ENCODE measurements at regions of chr18 and their contacts with region 1.

Region 1: DNA sequence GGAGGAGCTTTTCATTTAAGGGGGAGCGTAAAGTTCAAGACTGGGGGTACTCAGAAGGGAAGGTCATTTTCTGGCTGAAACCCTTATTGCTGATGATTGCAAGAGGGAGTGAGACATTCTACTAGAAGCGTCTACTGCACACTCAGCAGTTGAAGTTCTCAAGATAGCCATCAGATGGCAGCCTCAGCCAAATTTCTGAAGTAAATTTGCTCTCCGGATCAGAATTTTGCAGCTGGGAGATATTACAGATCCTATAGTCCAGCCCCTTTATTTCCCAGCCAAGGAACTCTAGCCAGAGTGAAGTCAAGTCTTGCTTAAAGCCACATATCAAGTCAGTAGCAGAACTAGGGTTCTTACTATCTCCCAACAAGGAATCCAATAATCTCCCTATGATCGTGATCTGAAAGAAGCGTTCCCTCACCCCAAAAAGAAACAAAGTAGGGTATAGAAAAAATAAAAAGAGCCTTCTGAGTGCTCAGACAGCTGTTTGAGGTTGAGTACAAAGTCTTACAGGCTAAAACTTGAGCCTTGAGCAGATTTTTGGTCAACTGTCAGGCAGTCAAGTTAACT is 24.0 kb downstream of the RAX start:
- DNase-seq: peak; percentile 69
- H3K4me3 ChIP-seq: no peak overlapping the region
- H3K27ac ChIP-seq: no peak overlapping the region
- H3K4me1 ChIP-seq: no peaks in the 10 kb centered on the region
- H3K27me3 ChIP-seq: peaks cover 5 to 16% of the 10 kb centered on the region in 2 experiments
- CTCF ChIP-seq: peak; percentile 51 to 70
- POLR2A ChIP-seq: no peak

Region 2: GRCh38 chr18:58960946-58961722 is 288.2 kb before region 1 on chr18:
- CTCF ChIA-PET with region 1: no interaction called
- POLR2A ChIA-PET with region 1: no interaction called
- dilution Hi-C with region 1: no loop called
- intact Hi-C with region 1: no loop called
- DNase-seq: no peak
- H3K4me3 ChIP-seq: no peak overlapping the region
- H3K27ac ChIP-seq: no peak overlapping the region
- H3K4me1 ChIP-seq: no peaks in the 10 kb centered on the region
- H3K27me3 ChIP-seq: no peaks in the 10 kb centered on the region
- CTCF ChIP-seq: no peak
- POLR2A ChIP-seq: no peak

Region 3: DNA sequence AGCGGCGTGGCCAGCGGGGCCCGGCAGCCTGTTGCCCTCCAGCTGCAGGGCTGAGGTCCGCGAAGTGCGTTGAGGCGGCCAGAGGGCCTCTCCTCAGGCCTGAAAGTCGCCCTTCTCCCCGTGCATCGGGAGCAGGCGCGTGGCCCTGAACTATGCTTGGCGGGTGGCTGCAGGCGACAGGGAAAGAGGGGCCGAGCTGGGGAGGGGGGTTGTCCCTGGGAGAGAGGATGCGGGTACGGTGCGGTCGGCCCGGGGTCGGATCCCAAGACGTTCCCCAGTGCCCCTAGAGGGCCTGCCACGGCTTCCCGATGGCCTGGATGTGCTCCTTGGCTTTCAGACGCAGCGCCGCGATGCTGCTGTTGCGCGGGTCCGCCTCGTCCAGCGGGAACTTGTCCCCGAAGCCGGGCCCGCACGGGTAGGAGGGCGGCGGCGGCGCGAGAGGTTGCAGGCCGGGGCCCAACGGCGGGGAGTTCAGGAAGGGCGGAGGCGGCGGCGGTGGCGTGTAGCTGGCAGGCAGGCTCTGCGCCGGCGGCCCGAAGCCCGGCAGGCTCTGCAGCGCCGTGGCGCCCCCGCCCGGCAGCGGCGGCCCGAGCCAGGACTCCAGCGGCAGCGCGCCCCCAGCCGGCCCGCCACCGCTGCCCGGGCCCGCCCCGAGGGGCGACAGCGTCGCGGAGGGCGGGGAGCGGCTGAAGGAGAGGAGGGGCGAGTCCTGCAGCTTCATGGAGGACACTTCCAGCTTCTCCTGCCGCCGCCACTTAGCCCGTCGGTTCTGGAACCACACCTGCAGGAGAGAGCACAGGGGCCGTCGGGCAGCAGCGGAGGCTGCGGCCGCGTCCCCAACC is 19.7 kb after region 1 on chr18:
- CTCF ChIA-PET with region 1: interaction called, 22 read pairs
- POLR2A ChIA-PET with region 1: no interaction called
- dilution Hi-C with region 1: no loop called
- intact Hi-C with region 1: no loop called
- DNase-seq: no peak
- H3K4me3 ChIP-seq: no peak overlapping the region
- H3K27ac ChIP-seq: no peak overlapping the region
- H3K4me1 ChIP-seq: peaks cover 2% of the 10 kb centered on the region
- H3K27me3 ChIP-seq: peaks cover 94 to 98% of the 10 kb centered on the region in 2 experiments
- CTCF ChIP-seq: peak in 1 of 2 donors; percentile 14
- POLR2A ChIP-seq: no peak

Region 4: GRCh38 chr18:59387687-59388565 is 138.6 kb after region 1 on chr18:
- CTCF ChIA-PET with region 1: interaction called, 11 read pairs
- POLR2A ChIA-PET with region 1: no interaction called
- dilution Hi-C with region 1: no loop called
- intact Hi-C with region 1: no loop called
- DNase-seq: no peak
- H3K4me3 ChIP-seq: no peak overlapping the region
- H3K27ac ChIP-seq: no peak overlapping the region
- H3K4me1 ChIP-seq: no peaks in the 10 kb centered on the region
- H3K27me3 ChIP-seq: peaks cover 0 to 7% of the 10 kb centered on the region in 2 experiments
- CTCF ChIP-seq: no peak
- POLR2A ChIP-seq: no peak